ENCODE measurements at regions of chr3 and their contacts with region 1.

Region 1: DNA sequence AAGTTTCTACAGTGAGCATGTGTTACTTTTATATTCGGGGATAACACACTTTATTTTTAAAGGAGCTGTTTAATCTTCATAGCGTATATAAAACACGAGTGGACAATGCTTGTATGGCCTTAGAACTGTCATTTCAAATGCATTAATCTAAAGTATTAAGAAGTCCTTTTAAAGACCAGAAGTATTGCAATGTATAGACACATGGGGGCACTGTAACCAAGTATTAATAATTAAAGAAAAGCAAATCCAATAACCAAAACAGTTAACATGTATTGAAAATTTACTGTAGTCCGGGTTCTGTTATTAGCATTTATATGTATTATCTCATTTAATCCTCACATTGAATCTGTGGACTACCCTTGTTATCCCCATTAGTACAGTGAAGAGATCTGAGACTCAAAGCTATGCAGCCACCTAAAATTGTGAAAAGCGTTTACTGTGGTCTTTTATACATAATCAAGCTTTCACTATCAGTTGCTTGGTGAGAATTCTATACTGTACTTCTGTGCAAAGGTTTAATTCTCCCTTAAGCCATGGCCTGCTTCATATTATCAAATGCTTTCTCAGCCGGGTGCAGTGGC is 10.1 kb downstream of the ARL14 start:
- DNase-seq: peak; percentile 25
- CTCF ChIP-seq: peak; percentile 48

Region 2: GRCh38 chr3:160941885-160942494 is 254.9 kb after region 1 on chr3:
- in situ Hi-C with region 1: loop called (anchors 25 kb)
- DNase-seq: peak; percentile 53
- CTCF ChIP-seq: peak; percentile 74

Region 3: GRCh38 chr3:161423911-161424522 is 737.0 kb after region 1 on chr3:
- in situ Hi-C with region 1: loop called (anchors 25 kb)
- DNase-seq: peak; percentile 50
- CTCF ChIP-seq: peak; percentile 56